ENCODE measurements at regions of chr3 and their contacts with region 1.

Region 1: GRCh38 chr3:197501879-197502620 is 53.7 kb downstream of the BDH1 start:
- DNase-seq: peak; percentile 81
- H3K4me3 ChIP-seq: no peak overlapping the region
- H3K27ac ChIP-seq: no peak overlapping the region
- H3K4me1 ChIP-seq: peaks cover 17% of the 10 kb centered on the region
- H3K27me3 ChIP-seq: no peaks in the 10 kb centered on the region
- CTCF ChIP-seq: peak; percentile 72

Region 2: DNA sequence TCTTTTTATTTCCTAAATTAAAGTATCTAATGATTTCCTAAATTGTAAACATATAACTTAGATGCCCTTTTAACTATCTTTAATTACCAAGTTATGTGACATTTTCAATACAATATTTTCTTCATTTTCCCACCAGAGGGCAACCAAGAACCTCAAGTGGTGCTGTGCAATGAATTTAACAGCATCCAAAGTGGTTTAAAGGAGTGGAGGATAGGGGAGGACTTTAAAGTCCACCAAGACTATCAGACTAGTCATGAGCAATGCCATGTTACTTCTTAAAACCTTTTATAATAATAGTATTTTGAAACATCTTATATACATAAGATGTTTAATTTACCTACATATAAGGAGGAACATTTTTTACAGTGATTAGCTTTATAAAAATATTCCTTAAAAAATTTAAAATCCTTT is 278.0 kb before region 1 on chr3:
- CTCF ChIA-PET with region 1: interaction called, 3 read pairs
- POLR2A ChIA-PET with region 1: no interaction called
- intact Hi-C with region 1: loop called (anchors 2 kb)
- DNase-seq: peak; percentile 82
- H3K4me3 ChIP-seq: no peak overlapping the region
- H3K27ac ChIP-seq: no peak overlapping the region
- H3K4me1 ChIP-seq: peaks cover 38% of the 10 kb centered on the region
- H3K27me3 ChIP-seq: no peaks in the 10 kb centered on the region
- CTCF ChIP-seq: peak; percentile 75

Region 3: DNA sequence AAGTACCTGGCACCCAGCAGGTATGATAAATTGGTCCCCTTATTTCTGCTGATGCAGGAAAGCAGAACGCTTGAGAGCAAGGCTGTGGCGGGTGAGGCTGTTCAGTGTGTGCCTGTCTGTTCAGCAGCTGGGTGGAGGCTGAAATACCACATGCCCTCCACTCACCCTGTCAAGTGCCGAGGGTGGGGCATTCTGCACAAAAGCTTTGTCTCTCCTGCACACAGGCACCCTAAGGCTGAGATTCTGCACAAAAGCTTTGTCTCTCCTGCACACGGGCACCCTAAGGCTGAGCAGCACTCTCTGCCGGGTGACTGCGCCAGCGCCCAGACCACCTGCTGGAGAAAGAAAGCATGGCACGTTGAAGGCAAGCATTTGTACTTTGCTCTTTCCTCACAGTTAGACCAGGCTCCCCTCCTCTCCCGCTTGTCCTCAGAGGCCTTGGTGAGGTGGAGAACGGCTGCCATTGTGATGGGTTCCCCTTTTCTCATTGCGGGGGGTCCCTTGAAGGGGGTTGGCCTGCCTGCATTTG is 43.8 kb before region 1 on chr3:
- CTCF ChIA-PET with region 1: no interaction called
- POLR2A ChIA-PET with region 1: no interaction called
- intact Hi-C with region 1: no loop called
- DNase-seq: peak; percentile 84
- H3K4me3 ChIP-seq: no peak overlapping the region
- H3K27ac ChIP-seq: no peak overlapping the region
- H3K4me1 ChIP-seq: peaks cover 29% of the 10 kb centered on the region
- H3K27me3 ChIP-seq: no peaks in the 10 kb centered on the region
- CTCF ChIP-seq: peak; percentile 72

Measured in A673 (cell line).